Stomach (tissue), 19 donors: ENCODE measurements at regions of chr22 and their contacts with region 1.

Region 1: GRCh38 chr22:30947816-30948454 is 20.6 kb downstream of the MORC2 start:
- DNase-seq: peak in 1 of 2 donors; percentile 84
- H3K4me3 ChIP-seq: no peak overlapping the region
- H3K27ac ChIP-seq: peak overlapping the region in 4 of 5 donors; percentile 27 to 70 (median 51)
- H3K4me1 ChIP-seq: peaks cover 0 to 20% (median 10%) of the 10 kb centered on the region in 4 donors
- H3K27me3 ChIP-seq: no peaks in the 10 kb centered on the region
- CTCF ChIP-seq: peak in 4 of 7 experiments; percentile 37 to 80 (median 64)
- EP300 ChIP-seq: no peak
- POLR2A ChIP-seq: no peak

Region 2: GRCh38 chr22:30694171-30694639 is 253.7 kb before region 1 on chr22:
- intact Hi-C with region 1: no loop called
- DNase-seq: peak; percentile 76 to 87
- H3K4me3 ChIP-seq: peak overlapping the region; percentile 52 to 72 (median 60)
- H3K27ac ChIP-seq: peak overlapping the region; percentile 71 to 90 (median 85)
- H3K4me1 ChIP-seq: peaks cover 7 to 25% (median 21%) of the 10 kb centered on the region in 4 donors
- H3K27me3 ChIP-seq: peaks cover 0 to 14% (median 0%) of the 10 kb centered on the region in 3 donors
- CTCF ChIP-seq: peak in 1 of 7 experiments; percentile 11
- EP300 ChIP-seq: no peak
- POLR2A ChIP-seq: no peak

Region 3: DNA sequence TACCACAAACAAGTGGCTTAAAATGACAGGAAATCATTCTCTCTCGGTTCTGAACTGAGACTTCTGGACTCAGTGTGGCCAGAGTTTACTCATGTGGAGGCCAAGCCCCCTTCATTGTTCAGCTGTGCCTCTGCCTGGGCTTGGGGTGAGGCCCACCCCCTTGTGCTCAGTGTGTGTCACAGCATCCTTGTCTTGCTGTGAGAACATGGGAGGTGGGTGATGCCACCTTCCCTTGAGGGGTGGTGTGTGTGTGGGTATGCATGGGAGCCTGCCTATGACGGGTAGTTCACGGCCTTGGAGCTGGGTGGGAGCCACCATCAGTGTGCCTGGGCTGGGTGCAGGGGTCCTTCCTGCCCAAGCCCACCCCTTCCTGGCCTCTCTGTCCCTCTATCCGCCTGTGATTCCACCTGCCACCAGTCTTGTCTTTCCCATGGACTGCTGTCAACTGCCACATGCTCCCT is 81.1 kb before region 1 on chr22:
- intact Hi-C with region 1: no loop called
- DNase-seq: peak in 1 of 2 donors; percentile 2
- H3K4me3 ChIP-seq: no peak overlapping the region
- H3K27ac ChIP-seq: no peak overlapping the region
- H3K4me1 ChIP-seq: no peaks in the 10 kb centered on the region
- H3K27me3 ChIP-seq: no peaks in the 10 kb centered on the region
- CTCF ChIP-seq: no peak
- EP300 ChIP-seq: no peak
- POLR2A ChIP-seq: no peak

Region 4: GRCh38 chr22:31084811-31085497 is 137.0 kb after region 1 on chr22:
- intact Hi-C with region 1: loop called (anchors 5 kb)
- DNase-seq: peak; percentile 91 to 95
- H3K4me3 ChIP-seq: peak overlapping the region; percentile 53 to 77 (median 62)
- H3K27ac ChIP-seq: peak overlapping the region; percentile 89 to 96 (median 95)
- H3K4me1 ChIP-seq: peaks cover 54 to 90% (median 78%) of the 10 kb centered on the region in 4 donors
- H3K27me3 ChIP-seq: no peaks in the 10 kb centered on the region
- CTCF ChIP-seq: peak in 5 of 7 experiments; percentile 63 to 94 (median 79)
- EP300 ChIP-seq: no peak
- POLR2A ChIP-seq: no peak

Region 5: DNA sequence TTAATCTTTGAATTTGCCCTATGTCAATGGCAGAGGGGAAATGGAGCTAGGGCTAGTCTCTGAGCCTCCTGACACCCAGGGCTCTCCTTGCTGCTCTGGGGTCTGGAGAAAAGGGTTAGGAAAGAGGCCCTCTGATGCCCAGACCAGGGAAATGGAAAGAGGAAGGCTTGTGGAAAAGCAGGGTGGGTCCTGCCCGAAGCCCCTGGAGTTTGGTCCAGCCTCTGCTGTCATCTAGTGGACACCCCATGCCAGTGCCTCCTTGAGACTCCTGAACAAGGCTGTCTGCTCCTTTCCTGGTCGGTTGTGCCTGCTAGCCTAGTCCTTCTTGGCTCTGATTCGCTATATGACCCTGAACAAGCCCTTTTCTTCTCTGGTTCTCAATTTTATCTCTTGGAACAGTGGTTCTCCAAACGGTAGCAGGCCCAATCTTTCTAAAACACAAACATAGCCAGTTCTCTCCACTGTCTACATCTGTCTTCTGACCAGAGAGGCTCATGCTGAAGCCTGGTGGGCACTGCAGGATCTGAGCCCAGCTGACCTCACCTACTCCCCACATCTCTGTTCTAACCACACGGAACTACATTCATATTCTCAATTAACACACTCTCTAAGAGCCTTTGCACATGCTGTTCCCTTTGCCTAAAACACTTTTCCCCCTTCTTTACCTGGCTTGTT is 201.2 kb after region 1 on chr22:
- intact Hi-C with region 1: loop called (anchors 10 kb)
- DNase-seq: peak; percentile 79 to 87
- H3K4me3 ChIP-seq: no peak overlapping the region
- H3K27ac ChIP-seq: peak overlapping the region in 4 of 5 donors; percentile 17 to 75 (median 64)
- H3K4me1 ChIP-seq: peaks cover 8 to 13% (median 12%) of the 10 kb centered on the region in 4 donors
- H3K27me3 ChIP-seq: no peaks in the 10 kb centered on the region
- CTCF ChIP-seq: peak in 5 of 7 experiments; percentile 88 to 96 (median 89)
- EP300 ChIP-seq: no peak
- POLR2A ChIP-seq: no peak

Region 6: DNA sequence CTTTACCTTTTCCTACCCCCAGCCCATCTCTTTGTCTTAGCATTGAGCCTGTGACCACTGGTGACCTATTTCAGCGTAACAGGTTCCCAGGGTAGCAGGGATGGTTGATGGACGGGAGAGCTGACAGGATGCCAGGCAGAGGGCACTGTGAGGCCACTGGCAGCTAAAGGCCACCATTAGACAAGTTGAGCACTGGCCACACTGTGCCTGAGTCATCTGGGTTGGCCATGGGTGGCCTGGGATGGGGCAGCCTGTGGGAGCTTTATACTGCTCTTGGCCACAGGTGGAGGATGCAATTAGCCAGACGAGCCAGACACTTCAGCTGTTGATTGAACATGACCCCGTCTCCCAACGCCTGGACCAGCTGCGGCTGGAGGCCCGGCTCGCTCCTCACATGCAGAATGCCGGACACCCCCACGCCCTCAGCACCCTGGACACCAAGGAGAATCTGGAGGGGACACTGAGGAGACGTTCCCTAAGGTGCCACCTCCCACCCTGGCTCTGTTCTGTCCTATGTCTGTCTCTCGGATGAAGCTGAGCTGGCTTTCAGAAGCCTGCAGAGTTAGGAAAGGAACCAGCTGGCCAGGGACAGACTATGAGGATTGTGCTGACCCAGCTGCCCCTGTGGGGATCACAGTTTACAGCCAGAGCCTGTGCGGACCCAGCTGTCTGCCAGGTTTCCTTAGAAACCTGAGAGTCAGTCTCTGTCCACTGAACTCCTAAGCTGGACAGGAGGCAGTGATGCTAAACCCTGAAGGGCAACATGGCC is 314.6 kb after region 1 on chr22:
- intact Hi-C with region 1: no loop called
- DNase-seq: no peak
- H3K4me3 ChIP-seq: no peak overlapping the region
- H3K27ac ChIP-seq: no peak overlapping the region
- H3K4me1 ChIP-seq: peaks cover 8 to 12% (median 10%) of the 10 kb centered on the region in 4 donors
- H3K27me3 ChIP-seq: no peaks in the 10 kb centered on the region
- CTCF ChIP-seq: no peak
- EP300 ChIP-seq: no peak
- POLR2A ChIP-seq: no peak

Region 7: GRCh38 chr22:31439808-31440207 is 491.9 kb after region 1 on chr22:
- intact Hi-C with region 1: no loop called
- DNase-seq: no peak
- H3K4me3 ChIP-seq: no peak overlapping the region
- H3K27ac ChIP-seq: no peak overlapping the region
- H3K4me1 ChIP-seq: no peaks in the 10 kb centered on the region
- H3K27me3 ChIP-seq: no peaks in the 10 kb centered on the region
- CTCF ChIP-seq: no peak
- EP300 ChIP-seq: no peak
- POLR2A ChIP-seq: no peak